Psoas muscle (tissue), 8 donors: ENCODE measurements at regions of chr9 and their contacts with region 1.

Region 1: GRCh38 chr9:136838314-136839228 is 3.7 kb upstream of the AJM1 start:
- DNase-seq: peak in 1 of 2 donors; percentile 40
- ATAC-seq: no peak
- H3K4me3 ChIP-seq: no peak overlapping the region
- H3K27ac ChIP-seq: no peak overlapping the region
- H3K4me1 ChIP-seq: peaks cover 9% of the 10 kb centered on the region
- H3K27me3 ChIP-seq: no peaks in the 10 kb centered on the region
- CTCF ChIP-seq: no peak

Region 2: GRCh38 chr9:136799854-136800657 is 38.5 kb before region 1 on chr9:
- intact Hi-C with region 1: loop called in 1 of 2 experiments (anchors 2 kb)
- DNase-seq: peak; percentile 69 to 80
- ATAC-seq: peak; percentile 60 to 73 (median 66)
- H3K4me3 ChIP-seq: peak overlapping the region; percentile 49
- H3K27ac ChIP-seq: no peak overlapping the region
- H3K4me1 ChIP-seq: peaks cover 9% of the 10 kb centered on the region
- H3K27me3 ChIP-seq: peaks cover 0 to 48% (median 7%) of the 10 kb centered on the region in 3 donors
- CTCF ChIP-seq: no peak

Region 3: DNA sequence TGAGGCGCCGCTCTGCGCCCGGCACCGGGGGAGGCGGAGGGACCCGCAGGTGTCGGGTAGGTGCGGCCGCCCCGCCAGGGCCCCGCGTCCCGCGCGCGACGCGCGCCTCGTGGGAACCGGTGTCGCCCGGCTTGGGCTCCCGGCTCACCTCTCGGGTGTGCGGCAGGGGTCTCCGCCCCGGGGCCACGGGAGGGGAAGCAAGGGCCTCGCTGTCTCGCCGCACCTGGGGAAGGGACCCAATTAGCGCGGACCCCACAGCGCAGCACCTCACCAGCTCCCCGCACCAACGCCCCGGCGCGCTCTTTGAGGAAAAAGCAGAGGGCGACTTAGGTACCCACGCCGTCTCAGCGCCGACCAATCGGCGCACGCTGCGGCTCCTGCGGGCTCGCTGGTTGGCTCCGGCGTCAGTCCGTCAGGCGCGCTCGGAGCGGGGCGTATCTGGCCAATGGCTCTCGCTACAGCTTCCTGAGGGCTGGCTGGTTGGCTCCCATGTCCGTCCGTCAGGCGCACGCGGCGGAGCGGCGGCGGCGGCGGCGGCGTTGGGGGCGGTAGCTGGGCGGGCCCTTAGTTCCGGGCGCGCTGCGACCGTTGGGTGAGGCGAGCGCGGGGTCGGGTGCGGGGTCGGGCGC is 47.5 kb after region 1 on chr9 and contains the start of gene TRAF2:
- intact Hi-C with region 1: no loop called
- DNase-seq: peak; percentile 98 to 99
- ATAC-seq: peak; percentile 97 to 99 (median 98)
- H3K4me3 ChIP-seq: peak within 1 kb of the TSS; percentile 98
- H3K27ac ChIP-seq: peak within 1 kb of the TSS; percentile 90
- H3K4me1 ChIP-seq: peaks cover 20% of the 10 kb centered on the region
- H3K27me3 ChIP-seq: no peaks in the 10 kb centered on the region
- CTCF ChIP-seq: no peak
- total RNA-seq, gene TRAF2: 5.4 to 13.2 (median 9.4) TPM